Activated CD4-positive, alpha-beta memory T cell treated with anti-CD3 and anti-CD28 coated beads for 36 hours (primary cell): ENCODE measurements at regions of chr11 and their contacts with region 1.

Region 1: DNA sequence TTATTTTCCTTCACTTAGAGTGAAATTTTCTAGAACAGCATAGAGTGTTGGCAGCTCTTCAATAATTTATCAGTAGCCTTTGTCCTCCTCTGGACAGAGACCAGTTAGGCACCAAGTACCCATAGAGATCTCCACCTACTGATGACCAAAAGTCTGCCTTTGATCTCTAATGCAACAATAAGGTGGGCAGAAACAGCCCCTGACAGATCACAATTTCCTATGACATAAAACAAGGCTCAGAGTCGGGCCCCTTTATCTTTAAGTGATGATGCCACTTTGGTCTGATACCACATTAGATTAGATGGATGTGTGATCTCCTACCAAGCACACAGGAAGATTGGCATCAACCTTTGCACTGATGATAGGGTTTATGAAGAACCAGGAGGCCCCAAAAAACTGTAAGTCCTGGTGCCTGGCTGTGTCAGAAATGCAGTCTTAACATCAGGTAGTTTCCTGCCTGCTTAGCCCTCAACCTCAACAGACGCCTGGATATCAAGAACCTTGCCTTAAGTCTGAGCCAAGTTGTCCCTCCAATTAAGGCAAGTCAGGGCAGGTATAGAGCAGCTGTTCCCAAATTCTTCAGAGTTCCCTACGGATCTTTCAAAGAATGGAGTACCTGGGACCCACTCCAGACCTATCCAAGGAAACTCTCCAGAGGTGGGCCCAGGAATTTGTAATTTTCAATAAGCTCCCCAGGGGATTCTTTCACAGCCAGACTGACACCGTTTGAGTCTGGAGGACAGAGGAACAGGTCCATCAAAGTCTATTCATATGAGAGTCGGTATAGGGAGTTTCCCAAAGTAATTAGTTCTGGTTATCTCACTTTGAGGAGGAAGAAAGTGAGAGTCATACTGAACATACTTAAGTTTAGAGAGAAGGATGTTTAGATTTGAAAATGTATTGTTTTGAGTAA is 30.6 kb upstream of the TMPRSS4 start:
- DNase-seq: peak; percentile 58
- H3K4me3 Mint-ChIP-seq: peak overlapping the region; percentile 28
- H3K27ac Mint-ChIP-seq: peak overlapping the region; percentile 91
- H3K4me1 Mint-ChIP-seq: peaks cover 91% of the 10 kb centered on the region
- H3K27me3 Mint-ChIP-seq: no peaks in the 10 kb centered on the region

Region 2: DNA sequence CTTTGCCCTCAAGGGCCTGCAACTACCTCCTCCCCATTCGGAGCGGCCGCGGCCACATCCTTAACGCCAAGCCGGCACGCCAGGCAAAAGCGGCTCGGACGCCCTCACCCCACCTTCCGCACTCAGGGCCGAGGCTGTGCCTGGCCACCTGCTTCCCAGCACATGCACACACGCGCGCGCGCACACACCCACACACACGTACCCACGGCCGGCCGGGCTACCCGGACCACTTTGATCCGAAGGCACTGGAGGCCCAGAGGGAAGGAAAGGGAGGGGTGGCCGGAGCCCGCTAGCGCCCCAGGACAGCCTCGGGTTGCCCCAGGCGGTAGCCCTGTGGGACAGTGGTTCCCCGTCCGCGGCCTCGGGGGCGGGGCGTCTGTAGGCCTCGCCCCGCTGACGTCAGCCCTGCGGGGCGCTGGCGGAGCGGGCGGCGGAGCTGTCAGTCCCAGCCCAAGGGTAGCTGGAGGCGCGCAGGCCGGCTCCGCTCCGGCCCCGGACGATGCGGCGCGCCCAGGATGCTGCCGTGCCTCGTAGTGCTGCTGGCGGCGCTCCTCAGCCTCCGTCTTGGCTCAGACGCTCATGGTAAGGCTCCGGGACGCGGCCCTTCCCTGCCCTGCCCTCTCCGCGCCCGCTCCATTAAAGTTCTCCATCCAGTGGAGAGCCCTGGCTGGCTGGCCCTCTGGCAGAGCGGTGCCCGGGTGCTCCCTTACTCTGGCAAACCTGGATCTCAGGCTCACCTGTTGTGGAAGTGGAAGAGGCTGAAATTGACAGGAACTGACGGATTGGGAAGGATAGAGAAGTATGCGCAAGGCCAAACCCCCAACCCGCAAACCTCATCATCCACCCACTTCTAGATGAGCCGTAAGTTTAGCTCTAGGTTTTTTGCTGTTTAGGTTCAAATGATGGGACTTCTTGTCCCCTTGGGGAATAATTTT is 60.1 kb before region 1 on chr11 and contains the start of gene IL10RA:
- CTCF ChIA-PET with region 1: interaction called, 82 read pairs
- POLR2A ChIA-PET with region 1: interaction called, 38 read pairs
- intact Hi-C with region 1: loop called (anchors 1 kb)
- DNase-seq: peak; percentile 91
- H3K4me3 Mint-ChIP-seq: peak within 1 kb of the TSS; percentile 82
- H3K27ac Mint-ChIP-seq: peak within 1 kb of the TSS; percentile 97
- H3K4me1 Mint-ChIP-seq: peaks cover 69% of the 10 kb centered on the region
- H3K27me3 Mint-ChIP-seq: no peaks in the 10 kb centered on the region
- total RNA-seq, gene IL10RA: 114 to 117 TPM

Region 3: DNA sequence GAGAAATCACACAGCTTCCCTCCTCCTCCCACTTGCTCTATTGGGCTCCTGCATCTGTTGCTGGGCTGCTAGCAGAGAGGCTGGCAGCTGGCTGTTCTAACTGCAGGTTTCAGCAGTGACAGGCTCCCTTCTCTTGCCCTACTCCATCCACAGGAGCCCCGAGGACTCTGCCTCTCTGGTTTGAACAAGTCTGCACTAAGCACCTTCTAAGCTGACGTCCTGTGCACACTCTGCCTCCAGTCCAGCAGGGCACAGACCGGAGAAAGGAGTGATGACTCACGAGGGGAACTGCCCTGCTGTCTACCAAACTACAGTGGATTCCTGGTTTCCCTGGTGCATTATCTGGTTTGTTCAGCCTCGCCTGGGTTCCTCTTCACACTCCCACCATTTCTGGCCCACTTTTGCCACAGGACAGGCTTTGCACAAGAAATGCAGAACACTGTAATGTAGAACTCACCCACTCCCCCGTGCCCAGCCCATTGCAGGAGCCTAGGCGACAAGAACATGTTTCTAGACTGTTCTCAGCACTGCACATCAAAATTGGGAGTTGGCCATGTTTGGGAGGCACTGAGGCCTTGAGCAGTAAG is 34.1 kb before region 1 on chr11:
- CTCF ChIA-PET with region 1: no interaction called
- POLR2A ChIA-PET with region 1: interaction called, 6 read pairs
- intact Hi-C with region 1: loop called (anchors 1 kb)
- DNase-seq: peak; percentile 52
- H3K4me3 Mint-ChIP-seq: no peak overlapping the region
- H3K27ac Mint-ChIP-seq: peak overlapping the region; percentile 63
- H3K4me1 Mint-ChIP-seq: peaks cover 81% of the 10 kb centered on the region
- H3K27me3 Mint-ChIP-seq: no peaks in the 10 kb centered on the region

Region 4: GRCh38 chr11:118033443-118033842 is 12.9 kb before region 1 on chr11:
- CTCF ChIA-PET with region 1: no interaction called
- POLR2A ChIA-PET with region 1: no interaction called
- intact Hi-C with region 1: loop called (anchors 1 kb)
- DNase-seq: peak; percentile 49
- H3K4me3 Mint-ChIP-seq: no peak overlapping the region
- H3K27ac Mint-ChIP-seq: peak overlapping the region; percentile 72
- H3K4me1 Mint-ChIP-seq: peaks cover 33% of the 10 kb centered on the region
- H3K27me3 Mint-ChIP-seq: no peaks in the 10 kb centered on the region

Region 5: GRCh38 chr11:118180300-118180703 is 134.0 kb after region 1 on chr11:
- CTCF ChIA-PET with region 1: no interaction called
- POLR2A ChIA-PET with region 1: no interaction called
- intact Hi-C with region 1: no loop called
- DNase-seq: no peak
- H3K4me3 Mint-ChIP-seq: no peak overlapping the region
- H3K27ac Mint-ChIP-seq: no peak overlapping the region
- H3K4me1 Mint-ChIP-seq: no peaks in the 10 kb centered on the region
- H3K27me3 Mint-ChIP-seq: peaks cover 8% of the 10 kb centered on the region

Region 6: DNA sequence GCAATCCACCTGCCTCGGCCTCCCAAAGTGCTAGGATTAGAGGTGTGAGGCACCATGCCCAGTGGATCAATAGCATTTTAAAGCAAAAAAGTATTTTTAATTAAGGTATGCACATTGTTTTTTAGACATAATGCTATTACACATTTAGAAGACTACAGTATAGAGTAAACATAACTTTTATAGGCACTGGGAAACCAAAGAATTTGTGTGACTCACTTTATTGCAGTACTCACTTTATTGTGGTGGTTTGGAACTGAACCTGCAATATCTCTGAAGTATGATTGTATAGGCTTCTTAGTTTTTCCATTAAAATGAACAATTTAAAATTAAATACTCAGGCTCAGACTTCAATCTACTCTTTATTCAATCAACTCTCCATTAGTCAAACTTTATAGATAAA is 240.7 kb after region 1 on chr11:
- CTCF ChIA-PET with region 1: no interaction called
- POLR2A ChIA-PET with region 1: no interaction called
- intact Hi-C with region 1: no loop called
- DNase-seq: no peak
- H3K4me3 Mint-ChIP-seq: no peak overlapping the region
- H3K27ac Mint-ChIP-seq: no peak overlapping the region
- H3K4me1 Mint-ChIP-seq: peaks cover 29% of the 10 kb centered on the region
- H3K27me3 Mint-ChIP-seq: no peaks in the 10 kb centered on the region